ENCODE measurements at regions of chr19 and their contacts with region 1.

Region 1: DNA sequence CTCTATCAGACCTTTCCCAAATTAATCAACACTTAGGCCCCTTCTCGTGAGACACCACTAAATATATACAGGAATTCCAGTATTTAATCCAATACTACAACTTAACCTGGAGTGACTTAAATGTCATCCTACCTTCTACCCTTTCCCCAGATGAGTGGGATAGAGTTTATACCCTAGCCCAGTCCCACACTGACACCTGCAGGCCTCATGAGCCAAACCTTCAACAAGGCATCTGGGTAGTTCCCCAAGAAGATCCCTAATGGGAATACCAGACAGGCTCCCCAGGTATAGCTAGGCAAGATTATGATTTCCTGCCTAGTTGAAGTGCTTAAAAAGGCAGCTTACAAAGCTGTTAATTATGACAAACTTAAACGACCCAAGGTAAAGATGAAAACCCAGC is 15.9 kb downstream of the ZNF83 start:
- DNase-seq: no peak
- H3K4me3 ChIP-seq: no peak overlapping the region
- H3K27ac ChIP-seq: no peak overlapping the region
- H3K4me1 ChIP-seq: no peaks in the 10 kb centered on the region
- H3K27me3 ChIP-seq: no peaks in the 10 kb centered on the region
- CTCF ChIP-seq: no peak
- POLR2A ChIP-seq: no peak

Region 2: DNA sequence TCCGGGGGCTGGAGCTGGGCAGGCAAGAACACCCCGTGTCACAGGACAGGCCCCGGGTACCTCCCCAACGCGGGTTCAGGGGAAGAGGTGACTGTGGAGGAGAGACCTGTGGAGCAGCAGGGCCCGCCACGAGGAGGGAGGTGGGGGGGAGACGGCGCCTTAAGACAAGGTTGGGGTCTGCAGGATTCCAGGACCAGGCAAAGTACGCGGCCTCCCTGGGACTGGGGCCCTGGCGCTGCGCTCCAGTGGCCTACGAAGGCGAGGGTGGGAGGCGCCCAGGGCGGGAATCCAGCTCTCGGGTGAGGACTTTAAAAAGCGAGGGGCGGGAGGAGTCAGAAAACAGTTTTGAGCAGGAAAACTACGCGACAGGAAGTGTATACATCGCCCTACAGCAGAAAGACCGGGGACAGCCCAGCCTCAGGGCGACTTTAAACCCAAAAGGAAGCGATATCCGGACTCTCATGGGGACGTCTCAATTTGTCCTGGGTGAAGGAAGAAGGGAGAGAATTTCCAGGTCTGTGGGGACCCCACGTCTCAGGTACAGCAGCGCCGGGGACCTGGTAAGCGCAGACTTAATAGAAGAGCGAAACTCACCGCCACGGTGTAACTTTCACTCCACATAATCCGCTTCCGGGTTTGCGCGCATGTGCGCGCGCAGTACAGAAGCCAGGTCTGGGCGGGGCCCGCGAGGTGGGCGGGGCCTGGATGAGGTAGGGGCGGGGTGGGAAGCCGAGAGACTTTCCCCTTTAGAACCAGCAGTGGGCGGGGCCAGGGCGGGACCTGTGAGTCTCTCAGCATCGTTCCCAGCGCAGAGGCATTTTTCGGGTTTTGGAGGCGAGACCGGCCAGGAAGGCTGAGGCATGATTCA is 15.7 kb after region 1 on chr19 and contains the start of gene ZNF83:
- intact Hi-C with region 1: loop called (anchors 1 kb)
- DNase-seq: peak; percentile 95 to 97
- H3K4me3 ChIP-seq: peak within 1 kb of the TSS; percentile 64 to 76 (median 76)
- H3K27ac ChIP-seq: peak within 1 kb of the TSS; percentile 80 to 88
- H3K4me1 ChIP-seq: peaks cover 0 to 3% of the 10 kb centered on the region in 2 donors
- H3K27me3 ChIP-seq: no peaks in the 10 kb centered on the region
- CTCF ChIP-seq: no peak
- POLR2A ChIP-seq: no peak
- total RNA-seq, gene ZNF83: 61.0 to 120 (median 71.8) TPM

Measured in breast epithelium (tissue), 4 donors.